MCF 10A (cell line): ENCODE measurements at regions of chr17 and their contacts with region 1.

Region 1: DNA sequence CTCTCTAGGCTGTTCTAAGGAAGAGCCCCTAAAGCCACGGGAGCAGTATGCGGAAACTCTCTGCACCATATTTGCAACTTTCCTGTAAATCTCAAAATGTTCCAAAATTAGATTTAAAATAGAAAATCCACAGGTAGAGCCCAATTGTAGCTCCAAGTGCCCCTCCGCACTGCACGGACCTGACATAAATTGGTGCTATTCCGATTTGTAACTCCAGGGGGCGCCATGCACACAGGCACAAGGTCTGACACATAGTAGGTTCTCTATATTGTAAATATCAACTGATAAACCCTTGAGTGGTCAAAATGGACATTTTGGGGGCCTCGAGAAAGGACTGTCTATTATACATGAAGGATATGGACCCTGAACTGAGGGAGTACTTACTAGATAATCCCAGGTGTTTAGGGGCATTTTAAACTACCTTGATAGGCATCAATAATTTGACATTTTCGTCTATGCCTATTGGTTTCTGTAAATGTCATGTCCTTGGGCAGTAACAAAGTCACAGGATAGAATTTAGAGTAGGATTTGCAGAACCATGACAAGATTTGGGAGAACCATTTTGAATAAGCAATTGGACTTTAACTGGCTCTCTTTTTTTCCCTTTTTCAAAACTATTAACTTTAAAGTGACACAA is 36.6 kb upstream of the TMEM132E start:
- DNase-seq: peak; percentile 1
- H3K4me3 Mint-ChIP-seq: no peak overlapping the region
- H3K27ac Mint-ChIP-seq: no peak overlapping the region
- H3K4me1 Mint-ChIP-seq: no peaks in the 10 kb centered on the region
- H3K27me3 Mint-ChIP-seq: no peaks in the 10 kb centered on the region
- CTCF ChIP-seq: peak; percentile 68

Region 2: DNA sequence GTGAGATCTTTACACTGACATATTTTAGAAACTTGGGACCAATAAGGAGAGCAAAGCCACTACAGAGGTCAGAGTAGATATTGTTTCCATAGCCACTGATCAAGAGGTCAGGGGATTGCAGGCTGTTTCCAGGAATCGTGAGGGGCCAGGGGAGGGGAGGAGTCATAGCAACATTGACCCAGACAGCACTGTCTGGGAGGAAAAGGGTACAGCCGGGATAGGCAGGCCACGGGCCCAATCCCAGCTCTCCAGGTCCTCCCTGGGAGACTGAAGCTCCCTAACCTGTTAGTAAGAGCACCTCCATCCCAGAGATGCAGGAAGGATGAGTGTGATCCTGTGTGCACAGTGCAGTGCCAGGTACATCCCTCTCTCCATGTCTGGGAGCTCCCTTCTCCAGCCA is 11.9 kb before region 1 on chr17:
- CTCF ChIA-PET with region 1: interaction called, 13 read pairs
- POLR2A ChIA-PET with region 1: no interaction called
- intact Hi-C with region 1: no loop called
- DNase-seq: no peak
- H3K4me3 Mint-ChIP-seq: no peak overlapping the region
- H3K27ac Mint-ChIP-seq: no peak overlapping the region
- H3K4me1 Mint-ChIP-seq: no peaks in the 10 kb centered on the region
- H3K27me3 Mint-ChIP-seq: no peaks in the 10 kb centered on the region
- CTCF ChIP-seq: no peak